Dendritic cell treated with granulocyte-macrophage colony-stimulating factor and Interleukin-4, amounts not matched to agents 40 ng/mL and 50 ng/mL, for 4 days (primary cell): ENCODE measurements at regions of chr12 and their contacts with region 1.

Region 1: GRCh38 chr12:45215419-45216229 is at the start of gene ANO6:
- H3K4me3 Mint-ChIP-seq: peak within 1 kb of the TSS; percentile 100
- H3K27ac Mint-ChIP-seq: peak within 1 kb of the TSS; percentile 90
- H3K4me1 Mint-ChIP-seq: peaks cover 47% of the 10 kb centered on the region
- H3K27me3 Mint-ChIP-seq: no peaks in the 10 kb centered on the region

Region 2: DNA sequence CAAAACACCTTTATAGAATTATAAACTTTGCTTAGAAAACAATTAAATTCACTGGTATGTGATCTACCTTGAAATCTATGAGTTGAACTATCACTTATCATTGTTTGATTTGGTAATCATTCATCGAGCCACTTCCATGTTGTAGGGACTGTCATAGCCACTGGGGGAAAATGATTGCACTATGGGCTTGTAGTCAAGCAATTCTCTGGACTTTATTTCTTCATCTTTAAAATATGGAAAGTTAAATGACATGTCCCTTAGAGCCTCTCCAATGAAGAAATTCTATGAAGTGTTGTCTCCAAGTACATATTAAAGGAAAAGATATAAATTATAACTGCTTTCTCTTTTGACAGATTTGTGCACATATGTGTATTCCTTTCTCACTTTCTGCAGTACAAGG is 436.8 kb before region 1 on chr12:
- intact Hi-C with region 1: no loop called
- H3K4me3 Mint-ChIP-seq: no peak overlapping the region
- H3K27ac Mint-ChIP-seq: no peak overlapping the region
- H3K4me1 Mint-ChIP-seq: no peaks in the 10 kb centered on the region
- H3K27me3 Mint-ChIP-seq: no peaks in the 10 kb centered on the region

Region 3: GRCh38 chr12:45170456-45171042 is 45.1 kb before region 1 on chr12:
- intact Hi-C with region 1: loop called (anchors 2 kb)
- H3K4me3 Mint-ChIP-seq: no peak overlapping the region
- H3K27ac Mint-ChIP-seq: no peak overlapping the region
- H3K4me1 Mint-ChIP-seq: peaks cover 6% of the 10 kb centered on the region
- H3K27me3 Mint-ChIP-seq: no peaks in the 10 kb centered on the region

Region 4: GRCh38 chr12:45183246-45183645 is 32.4 kb before region 1 on chr12:
- intact Hi-C with region 1: loop called (anchors 5 kb)
- H3K4me3 Mint-ChIP-seq: no peak overlapping the region
- H3K27ac Mint-ChIP-seq: no peak overlapping the region
- H3K4me1 Mint-ChIP-seq: peaks cover 26% of the 10 kb centered on the region
- H3K27me3 Mint-ChIP-seq: no peaks in the 10 kb centered on the region

Region 5: GRCh38 chr12:45205165-45205825 is 10.3 kb before region 1 on chr12:
- intact Hi-C with region 1: loop called (anchors 1 kb)
- H3K4me3 Mint-ChIP-seq: no peak overlapping the region
- H3K27ac Mint-ChIP-seq: no peak overlapping the region
- H3K4me1 Mint-ChIP-seq: peaks cover 24% of the 10 kb centered on the region
- H3K27me3 Mint-ChIP-seq: no peaks in the 10 kb centered on the region

Region 6: GRCh38 chr12:45728630-45729232 is 513.1 kb after region 1 on chr12:
- intact Hi-C with region 1: loop called (anchors 10 kb)
- H3K4me3 Mint-ChIP-seq: peak overlapping the region; percentile 96
- H3K27ac Mint-ChIP-seq: peak overlapping the region; percentile 96
- H3K4me1 Mint-ChIP-seq: peaks cover 13% of the 10 kb centered on the region
- H3K27me3 Mint-ChIP-seq: no peaks in the 10 kb centered on the region